ENCODE measurements at regions of chr12 and their contacts with region 1.

Region 1: GRCh38 chr12:131104463-131105350 is 151.0 kb downstream of the ADGRD1 start:
- DNase-seq: peak; percentile 88
- H3K4me3 Mint-ChIP-seq: no peak overlapping the region
- H3K27ac Mint-ChIP-seq: no peak overlapping the region
- H3K4me1 Mint-ChIP-seq: peaks cover 14% of the 10 kb centered on the region
- H3K27me3 Mint-ChIP-seq: no peaks in the 10 kb centered on the region

Region 2: DNA sequence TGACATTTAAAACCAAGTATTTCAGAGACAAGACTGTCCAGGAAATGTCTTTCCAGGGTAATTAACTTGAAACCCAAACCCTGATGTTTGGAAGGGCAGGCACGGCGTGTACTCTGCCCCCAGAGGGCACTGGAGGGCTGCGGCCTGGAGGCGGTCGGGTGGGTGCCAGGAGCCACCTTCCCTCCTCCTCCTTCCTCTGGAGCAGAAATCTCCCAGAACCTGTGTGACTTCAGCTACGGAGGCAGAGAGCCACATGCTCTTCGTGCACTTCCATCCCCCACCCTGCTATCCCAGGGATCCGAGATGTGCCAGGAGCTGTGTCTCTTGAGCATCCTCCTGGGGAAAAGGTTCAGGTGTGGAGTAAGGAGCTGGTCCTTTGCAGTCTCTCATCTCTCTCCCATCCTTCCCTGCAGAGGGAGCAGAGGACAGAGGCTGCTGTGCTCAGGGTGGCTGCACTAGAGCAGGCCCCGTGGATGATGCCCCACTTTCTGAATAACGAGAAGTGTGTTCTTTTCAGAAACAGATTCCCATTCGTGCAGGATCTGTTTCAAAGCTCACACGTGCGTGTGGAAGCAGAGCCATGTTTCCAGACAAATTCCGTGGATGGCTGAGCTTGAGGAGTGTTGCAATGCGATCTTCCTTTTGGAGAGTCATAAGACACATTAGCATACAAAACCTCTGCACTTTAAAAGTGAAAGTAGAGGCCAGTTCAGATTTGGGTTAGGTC is 11.8 kb after region 1 on chr12:
- CTCF ChIA-PET with region 1: interaction called, 25 read pairs
- intact Hi-C with region 1: no loop called
- DNase-seq: no peak
- H3K4me3 Mint-ChIP-seq: no peak overlapping the region
- H3K27ac Mint-ChIP-seq: no peak overlapping the region
- H3K4me1 Mint-ChIP-seq: no peaks in the 10 kb centered on the region
- H3K27me3 Mint-ChIP-seq: peaks cover 2% of the 10 kb centered on the region

Region 3: DNA sequence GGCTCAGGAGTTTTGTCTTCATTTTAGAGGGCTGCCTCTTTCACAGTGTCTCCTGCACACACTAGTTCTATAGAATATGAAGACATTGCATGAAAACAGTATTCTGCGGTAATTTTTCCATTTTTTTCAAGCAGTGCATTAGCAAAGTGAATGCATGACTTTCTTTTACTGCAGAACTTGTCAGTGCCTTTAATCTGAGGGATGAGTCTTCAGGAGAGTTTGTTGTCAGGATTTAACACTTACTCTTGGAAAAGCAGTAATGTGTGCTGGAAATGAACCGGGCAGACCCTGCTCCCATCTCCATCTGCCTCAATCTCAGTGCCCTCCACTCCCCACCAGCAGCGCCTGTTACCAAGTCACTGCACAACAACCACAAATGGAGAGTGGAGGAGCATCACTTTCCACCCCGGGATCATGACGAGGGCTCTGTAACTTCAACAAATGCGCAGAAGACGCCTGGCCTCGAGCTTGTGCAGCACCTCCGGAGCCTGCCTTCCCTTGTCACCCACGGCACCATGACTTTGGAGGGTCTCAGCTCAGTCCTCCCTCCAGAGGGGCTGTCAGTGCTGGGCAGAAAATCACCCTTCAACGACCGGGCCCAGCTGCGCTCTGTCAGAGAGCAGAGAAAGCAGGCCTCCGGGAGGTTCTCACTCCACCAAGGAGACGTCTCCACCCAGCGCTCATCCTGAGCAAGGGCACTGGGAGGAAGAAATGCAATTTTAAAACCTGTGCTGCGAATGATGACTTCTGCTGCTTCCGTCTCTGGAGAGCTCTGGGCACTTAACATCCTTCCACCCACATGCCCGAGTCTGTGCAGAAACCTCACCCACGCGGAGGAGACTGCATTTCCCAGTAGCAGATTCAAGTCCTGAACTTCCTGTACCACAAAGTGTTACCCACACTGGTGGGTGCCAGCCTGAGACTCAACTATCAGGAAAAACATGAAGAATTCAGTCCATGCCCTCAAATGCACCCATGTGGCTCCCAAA is 104.7 kb after region 1 on chr12:
- CTCF ChIA-PET with region 1: interaction called, 3 read pairs
- intact Hi-C with region 1: loop called (anchors 1 kb)
- DNase-seq: peak; percentile 25
- H3K4me3 Mint-ChIP-seq: no peak overlapping the region
- H3K27ac Mint-ChIP-seq: no peak overlapping the region
- H3K4me1 Mint-ChIP-seq: peaks cover 28% of the 10 kb centered on the region
- H3K27me3 Mint-ChIP-seq: no peaks in the 10 kb centered on the region

Region 4: GRCh38 chr12:131559517-131560516 is 455.1 kb after region 1 on chr12:
- CTCF ChIA-PET with region 1: interaction called, 3 read pairs
- intact Hi-C with region 1: loop called (anchors 5 kb)
- DNase-seq: no peak
- H3K4me3 Mint-ChIP-seq: no peak overlapping the region
- H3K27ac Mint-ChIP-seq: no peak overlapping the region
- H3K4me1 Mint-ChIP-seq: no peaks in the 10 kb centered on the region
- H3K27me3 Mint-ChIP-seq: no peaks in the 10 kb centered on the region